HEK293 (cell line): ENCODE measurements at regions of chr5 and their contacts with region 1.

Region 1: GRCh38 chr5:32076699-32077695 is 97.1 kb downstream of the GOLPH3 start:
- H3K4me3 ChIP-seq: no peak overlapping the region
- H3K27ac ChIP-seq: no peak overlapping the region
- H3K4me1 ChIP-seq: no peaks in the 10 kb centered on the region
- CTCF ChIP-seq: peak; percentile 61

Region 2: DNA sequence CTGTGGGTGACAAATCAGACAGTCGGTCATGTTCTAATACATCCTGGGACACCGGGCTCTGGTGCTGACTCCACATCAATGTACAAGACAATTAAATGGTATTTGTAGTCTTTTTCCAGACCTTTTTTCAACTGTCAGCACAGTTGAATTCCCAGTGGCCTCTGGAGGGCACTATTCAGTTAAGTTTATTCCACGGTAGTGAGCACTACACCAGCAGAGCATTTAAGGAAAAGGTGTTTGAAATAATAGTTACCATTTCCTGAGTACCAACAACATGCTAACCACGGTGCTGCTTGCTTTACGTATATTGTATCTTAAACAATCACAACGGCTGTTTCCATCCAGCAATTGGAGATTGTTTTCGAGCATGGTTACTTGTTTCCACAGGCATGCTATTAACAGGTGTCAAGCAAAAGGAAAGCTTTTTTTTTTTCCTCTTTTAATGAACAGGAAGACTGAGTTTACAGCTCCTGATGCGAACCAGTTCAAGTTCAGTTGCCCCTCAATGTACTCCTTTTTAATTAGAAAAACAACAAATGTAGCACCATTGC is 251.4 kb before region 1 on chr5:
- CTCF ChIA-PET with region 1: interaction called, 119 read pairs
- POLR2A ChIA-PET with region 1: interaction called, 4 read pairs
- H3K4me3 ChIP-seq: no peak overlapping the region
- H3K27ac ChIP-seq: no peak overlapping the region
- H3K4me1 ChIP-seq: peaks cover 10% of the 10 kb centered on the region; the same call in 1 of the 2 replicates
- CTCF ChIP-seq: peak; percentile 68

Region 3: GRCh38 chr5:31854181-31855133 is 222.5 kb before region 1 on chr5:
- CTCF ChIA-PET with region 1: interaction called, 14 read pairs
- POLR2A ChIA-PET with region 1: no interaction called
- H3K4me3 ChIP-seq: peak overlapping the region; percentile 52
- H3K27ac ChIP-seq: peak overlapping the region; percentile 54; the same call in 1 of the 2 replicates
- H3K4me1 ChIP-seq: peaks cover 10% of the 10 kb centered on the region
- CTCF ChIP-seq: no peak

Region 4: DNA sequence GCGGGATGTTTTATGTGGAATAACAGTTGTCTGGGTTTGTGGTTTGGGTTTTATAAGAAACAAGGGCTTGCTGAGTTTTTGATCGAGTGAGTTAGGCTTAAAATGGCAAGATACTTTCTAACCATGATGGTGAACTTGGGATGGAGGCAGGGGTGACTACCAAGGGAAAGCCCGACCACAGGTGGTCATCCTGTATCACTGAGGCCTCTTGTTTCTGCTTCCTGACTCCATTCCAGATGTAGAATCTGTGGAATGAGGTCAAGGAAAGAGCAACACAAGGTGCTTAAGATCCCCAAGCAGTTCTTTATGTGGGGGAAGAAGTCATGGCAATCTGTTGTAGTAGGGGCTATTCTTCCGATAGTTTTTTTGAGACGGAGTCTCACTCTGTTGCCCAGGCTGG is 25.2 kb before region 1 on chr5:
- CTCF ChIA-PET with region 1: no interaction called
- POLR2A ChIA-PET with region 1: no interaction called
- H3K4me3 ChIP-seq: no peak overlapping the region
- H3K27ac ChIP-seq: no peak overlapping the region
- H3K4me1 ChIP-seq: no peaks in the 10 kb centered on the region
- CTCF ChIP-seq: no peak

Region 5: DNA sequence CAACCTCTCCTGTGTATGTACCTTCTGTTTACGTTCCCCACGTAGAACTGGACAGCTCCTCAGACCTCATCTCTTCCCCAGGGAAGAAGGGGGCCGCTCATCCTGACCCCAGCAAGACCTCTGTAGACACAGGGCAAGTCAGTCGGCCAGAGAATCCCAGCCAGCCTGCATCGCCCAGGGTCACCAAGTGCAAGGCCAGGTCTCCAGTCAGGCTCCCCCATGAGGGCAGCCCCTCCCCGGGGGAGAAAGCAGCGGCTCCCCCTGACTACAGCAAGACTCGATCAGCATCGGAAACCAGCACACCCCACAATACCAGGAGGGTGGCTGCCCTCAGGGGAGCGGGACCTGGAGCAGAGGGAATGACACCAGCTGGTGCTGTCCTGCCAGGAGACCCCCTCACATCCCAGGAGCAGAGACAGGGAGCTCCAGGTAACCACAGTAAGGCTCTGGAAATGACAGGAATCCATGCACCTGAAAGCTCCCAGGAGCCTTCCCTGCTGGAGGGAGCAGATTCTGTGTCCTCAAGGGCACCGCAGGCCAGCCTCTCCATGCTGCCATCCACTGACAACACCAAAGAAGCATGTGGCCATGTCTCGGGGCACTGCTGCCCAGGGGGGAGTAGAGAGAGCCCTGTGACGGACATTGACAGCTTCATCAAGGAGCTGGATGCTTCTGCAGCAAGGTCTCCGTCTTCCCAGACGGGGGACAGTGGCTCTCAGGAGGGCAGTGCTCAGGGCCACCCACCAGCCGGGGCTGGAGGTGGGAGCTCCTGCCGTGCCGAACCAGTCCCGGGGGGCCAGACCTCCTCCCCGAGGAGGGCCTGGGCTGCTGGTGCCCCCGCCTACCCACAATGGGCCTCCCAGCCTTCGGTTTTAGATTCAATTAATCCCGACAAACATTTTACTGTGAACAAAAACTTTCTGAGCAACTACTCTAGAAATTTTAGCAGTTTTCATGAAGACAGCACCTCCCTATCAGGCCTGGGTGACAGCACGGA is 10.4 kb after region 1 on chr5:
- CTCF ChIA-PET with region 1: interaction called, 17 read pairs
- POLR2A ChIA-PET with region 1: no interaction called
- H3K4me3 ChIP-seq: no peak overlapping the region
- H3K27ac ChIP-seq: no peak overlapping the region
- H3K4me1 ChIP-seq: no peaks in the 10 kb centered on the region
- CTCF ChIP-seq: no peak